Head of caudate nucleus (tissue), 42 donors: ENCODE measurements at regions of chr13 and their contacts with region 1.

Region 1: GRCh38 chr13:49985129-49985528 is 11.7 kb upstream of the TRIM13 start:
- DNase-seq: no peak

Region 2: GRCh38 chr13:50170447-50171037 is 185.4 kb after region 1 on chr13:
- intact Hi-C with region 1: no loop called
- DNase-seq: no peak

Region 3: DNA sequence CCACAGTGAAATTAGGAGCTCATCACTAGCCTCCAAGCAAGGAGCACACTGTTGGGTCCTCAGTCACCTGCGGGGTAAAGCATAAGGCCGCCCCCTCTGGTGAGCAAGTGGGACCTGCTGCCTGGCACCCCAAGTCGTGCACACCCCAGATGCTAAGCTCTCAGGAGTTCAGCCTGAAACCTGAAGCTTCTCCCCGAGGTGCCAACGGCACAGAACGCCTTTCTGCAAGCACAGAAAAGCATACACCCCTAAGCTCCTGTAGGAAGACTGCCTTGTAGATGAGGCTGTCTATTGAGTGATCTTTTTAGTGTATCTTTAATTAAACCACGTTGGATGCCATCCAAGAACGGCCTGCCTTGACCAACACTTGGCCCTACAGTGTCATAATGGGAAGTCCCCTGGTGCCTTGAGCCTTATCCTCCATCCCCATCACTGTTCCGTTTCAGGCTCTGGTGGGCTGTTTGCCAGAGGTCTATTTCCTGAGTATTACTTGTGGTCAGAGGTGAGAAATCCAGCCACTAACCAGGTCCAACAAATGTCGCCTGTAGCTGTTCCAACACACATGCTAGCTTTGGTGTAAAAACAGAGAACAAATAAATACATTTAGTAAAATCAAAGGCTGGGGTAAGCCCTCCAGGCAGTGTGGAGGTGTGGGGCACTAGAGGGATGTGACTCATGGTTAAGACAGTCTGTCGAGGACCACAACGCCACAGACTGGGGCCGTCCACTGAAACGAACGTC is 1081.1 kb after region 1 on chr13:
- intact Hi-C with region 1: loop called (anchors 10 kb)
- DNase-seq: no peak